ENCODE measurements at regions of chr11 and their contacts with region 1.

Region 1: DNA sequence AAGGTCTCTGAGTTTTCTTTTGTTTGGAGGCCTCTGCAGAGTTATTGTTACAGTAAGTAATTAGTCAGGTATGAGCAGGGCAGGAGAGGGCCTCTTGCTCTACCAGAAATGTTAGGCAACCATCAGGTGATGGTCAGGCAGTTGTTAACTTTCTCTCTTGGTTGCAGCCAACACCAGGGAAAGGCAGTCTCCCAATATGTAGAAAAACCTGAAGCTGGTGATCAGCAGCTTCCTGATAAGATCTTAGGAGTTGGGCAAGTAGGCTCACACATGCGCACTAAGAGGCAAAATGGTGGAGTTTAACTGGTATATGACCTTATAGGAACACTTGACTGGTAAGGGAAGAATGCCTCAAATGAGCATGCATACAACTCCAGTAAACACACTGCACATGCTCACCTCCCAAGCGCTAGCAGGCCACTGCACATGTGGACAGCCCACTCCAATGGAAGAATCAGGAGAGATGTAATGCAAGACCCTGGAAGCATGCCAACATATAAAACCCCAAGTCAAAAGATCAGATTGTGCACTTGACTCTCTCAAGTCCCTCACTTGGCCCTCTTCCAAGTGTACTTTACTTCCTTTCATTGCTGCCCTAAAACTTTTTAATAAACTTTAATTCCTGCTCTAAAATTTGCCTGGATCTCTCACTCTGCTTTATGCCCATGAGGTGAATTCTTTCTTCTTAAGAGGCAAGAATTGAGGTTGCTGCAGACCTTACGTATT is 23.7 kb upstream of the SLC35F2 start:
- DNase-seq: no peak
- H3K4me3 ChIP-seq: no peak overlapping the region
- H3K27ac ChIP-seq: no peak overlapping the region
- H3K4me1 ChIP-seq: no peaks in the 10 kb centered on the region
- H3K27me3 ChIP-seq: no peaks in the 10 kb centered on the region
- CTCF ChIP-seq: no peak

Region 2: DNA sequence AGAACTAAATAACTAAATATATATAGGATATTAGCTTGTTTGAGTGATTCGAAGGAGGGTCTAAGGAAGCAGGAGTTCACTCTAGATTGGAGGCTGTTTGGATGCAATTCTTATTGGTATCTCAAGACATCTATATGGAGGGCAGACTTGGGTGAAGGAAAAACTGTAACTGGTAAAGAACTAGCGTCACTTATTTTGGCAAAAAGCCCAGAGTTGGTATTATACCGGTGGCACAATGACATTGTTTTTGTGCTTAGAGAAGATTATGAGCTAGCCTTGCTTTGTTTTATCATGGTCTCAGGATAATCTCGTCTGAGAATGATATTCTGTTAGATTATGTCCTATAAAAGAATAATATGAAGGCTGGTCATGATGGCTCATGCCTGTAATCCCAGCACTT is 17.7 kb before region 1 on chr11:
- CTCF ChIA-PET with region 1: interaction called, 4 read pairs
- POLR2A ChIA-PET with region 1: no interaction called
- intact Hi-C with region 1: loop called (anchors 1 kb)
- DNase-seq: peak; percentile 36
- H3K4me3 ChIP-seq: no peak overlapping the region
- H3K27ac ChIP-seq: no peak overlapping the region
- H3K4me1 ChIP-seq: no peaks in the 10 kb centered on the region
- H3K27me3 ChIP-seq: no peaks in the 10 kb centered on the region
- CTCF ChIP-seq: no peak

Region 3: DNA sequence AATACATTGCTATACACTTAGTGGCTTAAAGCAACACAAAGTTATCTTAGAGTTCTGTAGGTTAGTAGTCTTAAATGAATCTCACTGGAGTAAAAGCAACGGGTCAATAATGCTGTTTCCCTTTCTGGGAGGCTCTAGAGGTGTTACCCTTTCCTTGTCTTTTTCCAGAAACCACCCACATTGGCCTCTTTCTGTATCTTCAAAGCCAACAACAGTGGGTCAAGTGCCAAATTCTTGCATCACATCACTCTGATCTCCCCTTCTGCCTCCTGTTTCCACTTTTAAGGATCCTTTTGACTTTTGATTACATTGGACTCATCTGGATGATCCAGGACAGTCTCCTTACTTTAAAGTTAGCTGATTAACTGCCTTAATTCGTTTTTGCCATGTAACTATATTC is 876.2 kb after region 1 on chr11:
- CTCF ChIA-PET with region 1: interaction called, 10 read pairs
- POLR2A ChIA-PET with region 1: no interaction called
- intact Hi-C with region 1: no loop called
- DNase-seq: no peak
- H3K4me3 ChIP-seq: no peak overlapping the region
- H3K27ac ChIP-seq: no peak overlapping the region
- H3K4me1 ChIP-seq: peaks cover 41% of the 10 kb centered on the region
- H3K27me3 ChIP-seq: no peaks in the 10 kb centered on the region
- CTCF ChIP-seq: no peak